Sciatic nerve (tissue), 2 donors: ENCODE measurements at regions of chr2 and their contacts with region 1.

Region 1: DNA sequence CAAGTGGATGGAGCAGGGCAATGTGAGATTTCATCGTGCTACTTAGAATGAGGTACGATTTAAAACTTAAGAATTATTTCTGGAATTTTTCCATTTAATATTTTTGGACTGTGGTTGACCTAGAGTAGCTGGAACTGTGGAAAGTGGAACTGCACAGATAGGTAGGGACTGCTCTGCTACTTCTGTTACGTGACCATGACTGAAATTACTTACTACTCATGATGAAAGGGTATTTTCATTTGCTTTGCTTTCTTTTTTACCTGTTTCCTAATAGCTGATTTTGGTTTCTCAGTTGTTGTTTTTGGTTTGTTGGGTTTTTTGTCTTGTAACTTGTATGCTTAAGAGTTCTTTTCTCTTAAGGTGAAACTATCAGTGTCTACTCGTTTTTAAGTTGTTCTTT is 11.4 kb downstream of the UBE2E3 start:
- DNase-seq: no peak
- ATAC-seq: no peak

Region 2: DNA sequence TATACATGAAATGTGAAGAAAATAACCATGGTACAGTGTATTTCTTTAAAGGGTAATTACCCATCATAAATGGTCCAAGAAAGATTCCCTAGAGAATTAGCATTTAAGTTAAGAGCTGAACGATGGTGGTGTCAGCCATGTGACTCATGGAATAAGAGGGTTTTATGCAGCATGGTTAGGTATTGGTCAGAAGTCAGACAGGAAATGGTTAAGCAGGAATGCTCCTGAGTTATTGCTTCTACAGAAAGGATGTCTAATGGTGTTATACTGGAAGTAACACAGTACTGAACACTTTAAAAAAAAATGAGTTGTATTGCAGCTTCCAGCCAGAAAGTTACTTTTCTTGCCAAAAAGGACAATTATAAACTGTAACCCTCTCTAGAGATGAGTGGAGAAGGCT is 84.1 kb before region 1 on chr2:
- intact Hi-C with region 1: no loop called
- DNase-seq: no peak
- ATAC-seq: no peak

Region 3: GRCh38 chr2:181036848-181037603 is 45.2 kb after region 1 on chr2:
- intact Hi-C with region 1: loop called (anchors 1 kb)
- DNase-seq: no peak
- ATAC-seq: no peak